AG04450 (cell line): ENCODE measurements at regions of chr5 and their contacts with region 1.

Region 1: DNA sequence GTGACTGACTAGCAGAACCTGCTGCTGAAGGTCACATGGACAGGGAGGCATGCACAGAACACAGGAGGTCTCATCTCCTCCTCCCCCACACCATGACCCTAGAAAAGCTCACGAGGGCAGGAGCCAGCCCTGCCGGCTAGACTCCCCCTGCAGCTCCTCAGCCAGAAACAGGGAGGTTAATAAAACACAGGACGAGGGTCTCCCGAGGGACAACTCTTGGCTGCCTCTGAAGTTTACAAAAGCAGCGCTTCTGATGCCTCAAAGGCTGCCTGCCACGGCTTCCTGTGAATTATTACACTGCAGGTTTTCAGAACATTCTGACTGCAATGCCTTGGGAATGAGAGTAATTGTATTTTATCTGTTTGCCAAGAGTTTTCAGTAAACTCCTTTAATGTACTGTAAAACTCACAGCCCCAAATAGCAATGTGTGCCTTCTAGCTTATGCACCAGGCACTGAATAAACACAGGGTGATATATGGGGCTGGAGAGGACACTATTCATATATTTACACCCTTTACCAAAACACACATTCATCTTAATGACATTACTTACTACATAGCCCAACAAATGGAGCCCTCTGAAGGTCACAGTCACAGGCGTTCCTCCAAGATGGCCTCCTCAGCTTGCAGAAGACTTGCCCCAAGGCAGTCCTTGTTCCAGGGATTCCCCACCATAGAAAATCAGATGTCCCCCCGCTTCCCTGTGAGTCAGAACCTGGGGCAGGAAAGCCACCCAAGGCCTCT is 83.7 kb downstream of the C5orf15 start:
- DNase-seq: no peak
- H3K4me3 ChIP-seq: no peak overlapping the region
- H3K27ac ChIP-seq: no peak overlapping the region
- H3K27me3 ChIP-seq: peaks cover 31% of the 10 kb centered on the region
- CTCF ChIP-seq: no peak

Region 2: DNA sequence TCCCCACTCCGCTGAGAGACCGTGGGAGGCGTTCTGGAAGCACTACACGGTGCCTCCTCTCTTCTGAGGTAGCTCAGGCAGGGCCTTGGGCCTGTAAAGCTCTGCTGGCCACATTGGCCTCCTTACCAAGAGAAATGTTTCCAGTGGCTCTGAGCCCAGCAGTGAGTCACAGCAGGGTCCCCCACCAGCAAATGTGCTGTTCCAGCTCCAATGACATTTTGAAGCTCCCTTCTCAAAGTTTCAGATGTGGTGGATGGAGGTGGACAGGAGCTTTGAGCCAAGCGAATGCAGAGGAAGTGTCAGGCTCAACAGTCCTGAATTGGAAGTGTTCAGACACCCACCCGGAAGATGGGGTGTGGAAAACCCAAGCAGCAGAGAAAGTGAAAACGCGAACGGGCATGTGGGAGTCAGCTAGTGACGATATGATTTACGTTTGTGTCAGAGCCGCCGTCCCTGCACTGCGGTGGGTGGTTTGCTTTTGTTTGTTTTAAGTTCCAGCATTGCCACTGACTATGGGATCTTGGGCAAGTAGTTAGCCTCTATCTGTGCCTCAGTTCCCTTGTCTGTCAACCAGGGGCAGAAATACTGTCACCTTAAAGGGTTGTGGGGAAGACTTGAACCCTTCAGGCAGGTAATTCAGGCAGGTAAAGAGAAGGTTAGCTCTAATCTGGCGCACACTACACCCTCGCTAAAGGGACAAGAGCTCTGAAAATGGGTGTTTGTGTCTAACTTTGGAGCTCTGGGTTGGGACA is 45.5 kb after region 1 on chr5:
- CTCF ChIA-PET with region 1: no interaction called
- POLR2A ChIA-PET with region 1: interaction called, 10 read pairs
- DNase-seq: no peak
- H3K4me3 ChIP-seq: no peak overlapping the region
- H3K27ac ChIP-seq: no peak overlapping the region
- H3K27me3 ChIP-seq: peaks cover 12% of the 10 kb centered on the region
- CTCF ChIP-seq: no peak

Region 3: GRCh38 chr5:134018154-134018985 is 133.6 kb after region 1 on chr5:
- CTCF ChIA-PET with region 1: no interaction called
- POLR2A ChIA-PET with region 1: no interaction called
- DNase-seq: no peak
- H3K4me3 ChIP-seq: no peak overlapping the region
- H3K27ac ChIP-seq: peak overlapping the region; percentile 21
- H3K27me3 ChIP-seq: peaks cover 32% of the 10 kb centered on the region
- CTCF ChIP-seq: no peak